Prostate gland (tissue), 2 donors: ENCODE measurements at regions of chr13 and their contacts with region 1.

Region 1: GRCh38 chr13:27826379-27827353 is 34.4 kb downstream of the GSX1 start:
- DNase-seq: peak; percentile 74
- H3K4me3 ChIP-seq: no peak overlapping the region
- H3K27ac ChIP-seq: no peak overlapping the region
- H3K4me1 ChIP-seq: no peaks in the 10 kb centered on the region
- H3K27me3 ChIP-seq: peaks cover 17% of the 10 kb centered on the region
- CTCF ChIP-seq: peak; percentile 82 to 92 (median 92)
- POLR2A ChIP-seq: no peak

Region 2: GRCh38 chr13:26946684-26947343 is 879.9 kb before region 1 on chr13:
- intact Hi-C with region 1: loop called (anchors 10 kb)
- DNase-seq: no peak
- H3K4me3 ChIP-seq: no peak overlapping the region
- H3K27ac ChIP-seq: no peak overlapping the region
- H3K4me1 ChIP-seq: no peaks in the 10 kb centered on the region
- H3K27me3 ChIP-seq: no peaks in the 10 kb centered on the region
- CTCF ChIP-seq: peak in 3 of 4 experiments; percentile 50 to 72 (median 66)
- POLR2A ChIP-seq: no peak

Region 3: DNA sequence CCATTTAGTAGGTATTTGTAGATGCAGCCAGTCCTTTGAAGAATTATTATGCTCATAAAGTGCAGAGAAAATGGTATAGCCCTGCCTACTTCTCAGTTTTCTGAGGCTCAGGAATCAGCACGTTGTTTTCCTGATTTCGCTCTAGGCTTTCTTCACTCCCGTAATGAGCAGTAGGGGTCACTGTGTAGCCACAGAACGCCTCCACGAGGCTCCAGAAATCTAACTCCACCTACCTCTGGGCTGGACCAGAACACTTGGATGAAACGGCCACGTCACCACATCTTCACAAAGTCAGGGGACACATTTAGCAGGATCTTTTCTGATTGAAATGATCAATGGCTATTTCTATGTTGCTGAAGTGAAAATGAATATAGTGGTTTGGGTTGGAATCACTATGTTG is 452.0 kb before region 1 on chr13:
- intact Hi-C with region 1: loop called (anchors 5 kb)
- DNase-seq: peak; percentile 56
- H3K4me3 ChIP-seq: no peak overlapping the region
- H3K27ac ChIP-seq: no peak overlapping the region
- H3K4me1 ChIP-seq: no peaks in the 10 kb centered on the region
- H3K27me3 ChIP-seq: no peaks in the 10 kb centered on the region
- CTCF ChIP-seq: peak in 3 of 4 experiments; percentile 55 to 76 (median 74)
- POLR2A ChIP-seq: no peak

Region 4: GRCh38 chr13:27533155-27533643 is 293.5 kb before region 1 on chr13:
- intact Hi-C with region 1: loop called (anchors 1 kb)
- DNase-seq: peak; percentile 78
- H3K4me3 ChIP-seq: no peak overlapping the region
- H3K27ac ChIP-seq: no peak overlapping the region
- H3K4me1 ChIP-seq: no peaks in the 10 kb centered on the region
- H3K27me3 ChIP-seq: no peaks in the 10 kb centered on the region
- CTCF ChIP-seq: peak; percentile 65 to 89 (median 84)
- POLR2A ChIP-seq: no peak

Region 5: DNA sequence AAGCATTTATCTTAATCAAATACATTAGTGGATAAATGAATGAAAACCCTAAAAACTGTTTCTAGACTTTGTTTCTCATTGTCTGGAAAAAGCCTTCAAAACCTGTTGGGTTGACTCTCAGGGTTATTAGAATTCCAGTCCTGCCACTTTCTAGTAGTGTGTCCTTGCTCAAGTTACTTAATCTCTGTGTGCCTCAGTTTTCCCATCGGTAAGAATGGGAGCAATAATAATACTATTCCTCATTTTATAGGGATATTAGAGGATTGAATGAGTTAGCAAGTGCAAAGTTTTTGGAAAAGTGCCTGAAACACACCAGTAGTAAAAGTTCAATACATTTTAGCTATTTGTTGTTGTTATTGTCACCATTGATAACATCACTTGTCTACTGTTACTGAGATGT is 158.9 kb after region 1 on chr13:
- intact Hi-C with region 1: loop called (anchors 2 kb)
- DNase-seq: no peak
- H3K4me3 ChIP-seq: no peak overlapping the region
- H3K27ac ChIP-seq: no peak overlapping the region
- H3K4me1 ChIP-seq: no peaks in the 10 kb centered on the region
- H3K27me3 ChIP-seq: peaks cover 8% of the 10 kb centered on the region
- CTCF ChIP-seq: no peak
- POLR2A ChIP-seq: no peak